Activated T-helper 1 cell treated with anti-CD3 and anti-CD28 coated beads, Interleukin-12 subunit alpha, Interleukin-12 subunit beta, Interleukin-2, Interleukin-4 antibody, amounts not matched to agents 30 ng/mL and 10 ng/mL and 1 ng/mL, durations not matched to agents 14 hours and 24 hours and 36 hours (primary cell): ENCODE measurements at regions of chr19 and their contacts with region 1.

Region 1: DNA sequence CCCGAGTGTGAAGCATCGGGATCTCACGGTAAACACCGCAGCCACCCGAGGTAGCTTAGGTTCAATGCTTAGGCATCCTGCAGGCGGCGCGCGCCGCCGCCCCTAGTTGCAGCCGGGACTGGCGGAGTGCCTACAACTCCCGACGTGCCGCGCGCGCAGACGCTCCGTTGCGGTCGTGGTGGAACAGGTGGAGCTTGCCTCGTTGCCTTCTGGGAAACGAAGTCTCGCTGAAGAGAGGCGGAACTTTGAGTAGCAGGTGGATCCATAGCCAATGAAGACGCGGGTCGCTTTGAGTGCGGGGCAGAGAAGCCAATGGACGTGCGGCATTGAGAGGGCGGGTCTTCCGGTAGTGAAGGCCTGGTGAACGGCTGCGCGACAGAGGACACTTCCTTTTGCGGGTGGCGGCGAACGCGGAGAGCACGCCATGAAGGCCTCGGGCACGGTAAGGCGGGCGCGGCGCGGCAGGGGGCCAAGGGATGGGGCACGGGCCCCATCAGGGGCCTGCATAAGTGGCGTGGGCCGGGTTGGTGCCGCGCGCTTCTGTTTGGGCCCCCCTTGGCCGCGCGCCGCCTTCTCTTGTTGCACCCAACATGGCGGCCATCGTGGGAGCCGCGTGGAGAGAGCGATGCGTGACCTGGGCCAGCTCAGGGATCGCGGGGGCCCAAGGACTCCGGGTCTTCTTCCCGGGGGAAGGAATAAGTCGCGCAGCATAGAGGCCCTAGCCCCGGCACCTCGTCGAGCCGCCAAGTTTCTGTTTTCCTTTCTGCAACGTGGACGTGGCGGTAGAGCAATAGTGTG is at the start of gene RPL18A:
- DNase-seq: peak; percentile 99
- H3K4me3 Mint-ChIP-seq: peak within 1 kb of the TSS; percentile 99
- H3K27ac Mint-ChIP-seq: peak within 1 kb of the TSS; percentile 100
- H3K4me1 Mint-ChIP-seq: peaks cover 31% of the 10 kb centered on the region
- H3K27me3 Mint-ChIP-seq: peaks cover 1% of the 10 kb centered on the region
- total RNA-seq, gene RPL18A: 2,494 and 2,556 TPM in 2 replicates

Region 2: GRCh38 chr19:17511724-17512573 is 347.8 kb before region 1 on chr19:
- intact Hi-C with region 1: loop called (anchors 5 kb)
- DNase-seq: peak; percentile 75
- H3K4me3 Mint-ChIP-seq: peak overlapping the region; percentile 99
- H3K27ac Mint-ChIP-seq: peak overlapping the region; percentile 79
- H3K4me1 Mint-ChIP-seq: peaks cover 28% of the 10 kb centered on the region
- H3K27me3 Mint-ChIP-seq: no peaks in the 10 kb centered on the region

Region 3: DNA sequence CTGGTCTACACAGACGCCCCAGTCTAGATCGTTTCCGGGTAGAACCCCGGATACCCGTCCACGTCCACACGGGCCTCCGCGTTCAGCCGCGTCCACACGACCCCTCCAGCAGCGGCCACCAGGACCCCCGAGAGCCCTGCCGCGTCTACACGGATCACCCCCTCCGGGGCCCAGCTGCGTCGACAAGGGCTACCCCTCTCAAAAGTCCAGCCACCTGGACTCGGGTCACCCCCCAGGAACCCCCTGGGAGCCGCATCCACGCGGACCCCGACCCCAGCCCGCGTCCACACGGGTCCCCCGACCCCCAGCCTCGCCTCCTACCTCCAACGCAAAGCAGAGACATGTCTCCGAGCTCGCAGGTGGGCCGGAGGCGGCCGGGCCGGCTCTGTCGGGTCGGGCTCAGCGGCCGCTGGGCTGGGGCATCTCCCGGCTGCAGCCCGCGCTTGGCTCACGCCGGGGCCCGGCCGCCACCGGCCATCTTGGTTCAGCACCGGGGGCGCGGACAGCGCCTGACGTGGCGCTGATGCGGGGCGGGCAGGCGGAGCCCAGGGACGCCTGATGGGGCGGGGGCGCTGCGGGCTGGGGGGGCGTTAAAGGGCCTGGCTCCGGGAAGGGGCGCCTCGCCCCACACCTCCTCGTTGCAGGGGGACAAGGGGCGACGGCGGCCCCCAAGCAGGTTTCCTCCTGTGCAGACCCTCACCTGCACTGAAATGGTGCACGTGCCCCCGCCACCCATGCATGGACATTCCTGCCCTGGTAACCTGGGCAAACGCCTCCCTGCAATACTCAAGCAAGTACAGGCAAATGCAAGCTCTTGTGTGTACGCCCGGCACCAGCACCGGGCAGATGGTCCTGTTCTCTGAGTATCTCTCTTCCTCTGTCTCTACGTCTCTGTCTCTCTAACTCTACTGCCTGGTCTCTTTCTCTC is 171.6 kb before region 1 on chr19 and contains the start of gene UNC13A:
- intact Hi-C with region 1: no loop called
- DNase-seq: peak; percentile 28
- H3K4me3 Mint-ChIP-seq: no peak within 1 kb of the TSS
- H3K27ac Mint-ChIP-seq: no peak within 1 kb of the TSS
- H3K4me1 Mint-ChIP-seq: peaks cover 9% of the 10 kb centered on the region
- H3K27me3 Mint-ChIP-seq: peaks cover 46% of the 10 kb centered on the region
- total RNA-seq, gene UNC13A: 0.02 TPM in 1 of 2 replicates, not detected in the other

Region 4: DNA sequence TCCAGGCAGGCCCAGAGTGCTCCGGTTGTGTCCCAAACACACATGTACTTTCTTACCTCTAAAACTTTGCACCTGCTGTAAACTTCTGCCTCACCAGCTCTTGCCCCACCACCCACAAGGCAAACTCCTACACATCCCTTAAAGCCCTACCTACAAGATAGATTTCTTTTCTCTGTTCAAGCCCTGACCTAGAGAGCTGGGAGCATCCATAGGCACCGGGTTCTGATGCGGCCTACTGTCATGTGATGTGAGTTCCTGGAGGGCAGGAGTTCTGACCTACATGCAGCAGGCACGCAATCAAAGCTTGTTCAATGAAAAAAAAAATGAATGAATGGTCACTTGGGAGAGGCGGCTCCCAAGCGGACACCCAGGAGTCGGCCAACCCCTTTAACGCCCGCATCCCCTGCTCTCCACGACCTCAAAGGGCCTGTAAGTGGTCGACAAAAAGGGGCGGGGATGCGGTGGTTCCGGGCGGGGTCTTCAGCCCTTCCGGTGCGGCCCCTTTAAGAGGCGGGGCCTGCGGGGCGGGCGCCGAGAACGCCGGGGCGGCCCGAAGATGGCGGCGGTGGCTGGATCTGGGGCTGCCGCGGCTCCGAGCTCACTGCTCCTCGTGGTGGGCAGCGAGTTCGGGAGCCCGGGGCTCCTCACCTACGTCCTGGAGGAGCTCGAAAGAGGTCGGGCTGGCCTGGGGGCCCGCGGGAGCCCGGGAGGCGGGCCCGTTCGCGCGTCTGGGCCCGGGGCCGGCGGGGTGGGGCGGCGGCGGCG is 140.6 kb before region 1 on chr19 and contains the start of gene MAP1S:
- intact Hi-C with region 1: loop called (anchors 1 kb)
- DNase-seq: peak; percentile 66
- H3K4me3 Mint-ChIP-seq: peak within 1 kb of the TSS; percentile 91
- H3K27ac Mint-ChIP-seq: peak within 1 kb of the TSS; percentile 89
- H3K4me1 Mint-ChIP-seq: peaks cover 43% of the 10 kb centered on the region
- H3K27me3 Mint-ChIP-seq: peaks cover 2% of the 10 kb centered on the region
- total RNA-seq, gene MAP1S: 81.7 and 83.7 TPM in 2 replicates

Region 5: DNA sequence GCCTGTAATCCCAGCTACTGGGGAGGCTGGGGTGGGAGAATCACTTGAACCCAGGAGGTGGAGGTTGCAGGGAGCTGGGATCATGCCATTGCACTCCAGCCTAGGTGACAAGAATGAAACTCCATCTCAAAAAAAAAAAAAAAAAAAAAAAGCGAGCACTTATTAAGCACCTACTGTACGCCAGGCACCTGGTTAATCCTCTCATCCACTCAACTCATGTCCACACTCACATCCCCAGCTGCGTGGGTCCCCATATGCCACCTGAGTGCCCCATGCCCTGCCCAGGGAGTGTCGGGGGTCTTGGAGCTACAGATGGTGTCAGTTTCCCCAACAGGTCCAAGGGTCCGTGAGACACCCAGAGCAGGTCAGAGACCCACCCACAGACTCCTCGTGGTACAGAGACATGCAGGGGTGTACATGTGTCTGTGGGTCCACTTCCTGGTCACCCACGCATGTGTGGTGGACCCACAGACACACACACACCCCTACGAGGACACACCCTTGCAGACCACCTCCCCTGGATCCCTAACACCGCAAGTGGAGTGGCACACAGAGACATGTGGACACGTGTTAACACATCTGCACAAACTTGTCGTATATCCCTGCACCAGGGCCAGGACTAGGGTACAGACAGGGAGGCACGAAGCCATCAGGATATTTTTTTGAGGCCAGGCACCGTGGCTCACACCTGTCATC is 41.9 kb before region 1 on chr19:
- intact Hi-C with region 1: no loop called
- DNase-seq: no peak
- H3K4me3 Mint-ChIP-seq: no peak overlapping the region
- H3K27ac Mint-ChIP-seq: no peak overlapping the region
- H3K4me1 Mint-ChIP-seq: no peaks in the 10 kb centered on the region
- H3K27me3 Mint-ChIP-seq: no peaks in the 10 kb centered on the region

Region 6: GRCh38 chr19:17830567-17831418 is 28.9 kb before region 1 on chr19:
- intact Hi-C with region 1: loop called (anchors 2 kb)
- DNase-seq: peak; percentile 12
- H3K4me3 Mint-ChIP-seq: no peak overlapping the region
- H3K27ac Mint-ChIP-seq: no peak overlapping the region
- H3K4me1 Mint-ChIP-seq: peaks cover 11% of the 10 kb centered on the region
- H3K27me3 Mint-ChIP-seq: no peaks in the 10 kb centered on the region

Region 7: DNA sequence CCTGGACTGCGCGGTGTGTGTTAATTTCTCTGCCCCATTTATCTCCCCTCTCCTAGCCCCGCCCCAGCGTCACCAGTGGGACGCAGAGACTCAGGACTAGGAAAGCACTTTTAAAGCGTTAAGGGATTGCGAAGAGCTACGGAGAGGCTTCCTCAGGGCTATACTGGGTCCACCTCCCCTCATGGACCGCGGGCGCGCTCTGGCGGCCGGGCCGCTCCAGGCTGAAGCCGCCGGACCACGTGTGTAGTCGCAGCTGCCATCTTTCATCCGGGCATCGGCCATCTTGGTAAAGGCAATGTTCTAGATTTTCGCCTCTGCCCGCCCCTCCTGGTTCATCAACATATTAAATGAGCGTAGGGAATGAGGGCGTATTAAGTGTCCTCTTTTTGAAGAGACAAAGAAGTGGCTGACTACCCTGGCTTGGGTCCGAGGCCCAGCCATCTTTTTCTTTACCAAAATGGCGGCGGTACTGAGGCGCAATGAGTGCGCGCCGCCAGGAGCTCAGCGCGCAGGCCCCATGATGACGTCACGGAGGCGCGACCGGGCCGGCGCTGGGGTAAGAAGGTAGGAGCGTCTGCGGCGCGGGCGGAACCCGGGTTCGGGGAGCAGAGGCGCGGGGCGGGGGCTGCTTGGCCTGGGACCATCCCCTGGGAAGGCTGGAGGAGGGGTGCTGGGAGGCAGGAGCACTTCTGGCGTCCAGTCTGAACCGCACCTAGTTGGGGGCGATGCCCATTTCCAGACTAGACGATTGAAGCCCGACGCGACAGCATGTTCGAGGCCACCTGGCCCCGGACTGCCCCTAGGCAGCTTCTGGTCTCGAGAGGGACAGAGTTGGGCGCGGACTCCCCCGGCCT is 73.0 kb after region 1 on chr19 and contains the start of gene CCDC124:
- intact Hi-C with region 1: loop called (anchors 1 kb)
- DNase-seq: peak; percentile 89
- H3K4me3 Mint-ChIP-seq: peak within 1 kb of the TSS; percentile 87
- H3K27ac Mint-ChIP-seq: peak within 1 kb of the TSS; percentile 82
- H3K4me1 Mint-ChIP-seq: peaks cover 21% of the 10 kb centered on the region
- H3K27me3 Mint-ChIP-seq: no peaks in the 10 kb centered on the region
- total RNA-seq, gene CCDC124: 122 and 128 TPM in 2 replicates